ENCODE measurements at regions of chr2 and their contacts with region 1.

Region 1: GRCh38 chr2:19851116-19851695 is 50.6 kb downstream of the TTC32 start:
- DNase-seq: no peak
- ATAC-seq: peak; percentile 35
- H3K4me3 ChIP-seq: no peak overlapping the region
- H3K27ac ChIP-seq: no peak overlapping the region
- H3K4me1 ChIP-seq: no peaks in the 10 kb centered on the region
- H3K27me3 ChIP-seq: peaks cover 3% of the 10 kb centered on the region
- CTCF ChIP-seq: no peak
- POLR2A ChIP-seq: no peak
- RAD21 ChIP-seq: 0 out of 2 replicates have a peak, but pooled peaks have one; percentile 18

Region 2: GRCh38 chr2:19682493-19682892 is 168.7 kb before region 1 on chr2:
- CTCF ChIA-PET with region 1: no interaction called
- POLR2A ChIA-PET with region 1: no interaction called
- dilution Hi-C with region 1: no loop called
- in situ Hi-C with region 1: loop called (anchors 10 kb)
- intact Hi-C with region 1: no loop called
- DNase-seq: peak; percentile 31
- ATAC-seq: no peak
- H3K4me3 ChIP-seq: no peak overlapping the region
- H3K27ac ChIP-seq: no peak overlapping the region
- H3K4me1 ChIP-seq: peaks cover 2% of the 10 kb centered on the region; the same call in 1 of the 2 replicates
- H3K27me3 ChIP-seq: peaks cover 17% of the 10 kb centered on the region
- CTCF ChIP-seq: no peak
- POLR2A ChIP-seq: no peak
- RAD21 ChIP-seq: no peak

Region 3: DNA sequence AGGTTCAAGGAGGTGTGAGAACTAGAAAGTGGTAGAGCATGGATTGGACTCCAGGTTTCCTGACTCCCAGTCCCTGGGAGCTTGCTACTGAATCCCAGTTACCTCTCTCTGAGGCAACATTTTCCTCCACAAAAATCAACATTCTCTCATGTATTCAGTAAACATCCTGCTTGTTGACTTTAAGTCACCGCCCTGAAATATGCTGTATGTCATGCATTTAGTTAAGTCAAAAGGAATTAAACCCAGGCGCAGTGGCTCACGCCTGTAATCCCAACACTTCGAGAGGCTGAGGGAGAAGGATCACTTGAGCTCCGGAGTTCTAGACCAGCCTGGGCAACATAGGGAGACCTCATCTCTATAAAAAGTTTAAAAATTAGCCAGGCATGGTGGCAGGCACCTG is 157.5 kb after region 1 on chr2:
- CTCF ChIA-PET with region 1: no interaction called
- POLR2A ChIA-PET with region 1: no interaction called
- dilution Hi-C with region 1: no loop called
- in situ Hi-C with region 1: no loop called
- intact Hi-C with region 1: no loop called
- DNase-seq: no peak
- ATAC-seq: no peak
- H3K4me3 ChIP-seq: no peak overlapping the region
- H3K27ac ChIP-seq: no peak overlapping the region
- H3K4me1 ChIP-seq: peaks cover 3% of the 10 kb centered on the region
- H3K27me3 ChIP-seq: peaks cover 14% of the 10 kb centered on the region
- CTCF ChIP-seq: no peak
- POLR2A ChIP-seq: no peak
- RAD21 ChIP-seq: no peak

Region 4: GRCh38 chr2:20135631-20136050 is 284.4 kb after region 1 on chr2:
- CTCF ChIA-PET with region 1: no interaction called
- POLR2A ChIA-PET with region 1: no interaction called
- dilution Hi-C with region 1: no loop called
- in situ Hi-C with region 1: no loop called
- intact Hi-C with region 1: no loop called
- DNase-seq: peak; percentile 61
- ATAC-seq: peak; percentile 85
- H3K4me3 ChIP-seq: no peak overlapping the region
- H3K27ac ChIP-seq: no peak overlapping the region
- H3K4me1 ChIP-seq: peaks cover 8% of the 10 kb centered on the region
- H3K27me3 ChIP-seq: peaks cover 13% of the 10 kb centered on the region
- CTCF ChIP-seq: peak; percentile 81
- POLR2A ChIP-seq: no peak
- RAD21 ChIP-seq: peak; percentile 78

Region 5: DNA sequence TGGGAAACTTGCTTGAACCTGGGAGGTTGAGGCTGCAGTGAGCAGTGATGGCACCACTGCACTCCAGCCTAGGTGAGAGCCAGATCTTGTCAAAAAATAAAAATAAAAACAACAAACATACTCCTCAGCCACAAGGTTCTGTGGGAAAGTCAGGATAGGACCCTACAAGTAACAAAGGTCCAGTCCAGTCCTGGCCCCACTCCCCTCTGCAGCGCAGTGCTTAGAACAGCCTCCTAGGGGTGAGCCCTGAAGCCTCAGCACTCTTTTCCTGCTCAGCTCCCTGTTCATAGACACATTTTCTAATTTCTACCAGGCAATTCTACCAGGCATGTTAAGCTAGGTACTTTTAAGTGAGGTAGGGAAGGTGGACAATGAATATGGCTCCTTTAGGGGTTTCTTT is 395.9 kb after region 1 on chr2:
- CTCF ChIA-PET with region 1: no interaction called
- POLR2A ChIA-PET with region 1: no interaction called
- dilution Hi-C with region 1: no loop called
- in situ Hi-C with region 1: no loop called
- intact Hi-C with region 1: no loop called
- DNase-seq: no peak
- ATAC-seq: no peak
- H3K4me3 ChIP-seq: no peak overlapping the region
- H3K27ac ChIP-seq: no peak overlapping the region
- H3K4me1 ChIP-seq: no peaks in the 10 kb centered on the region
- H3K27me3 ChIP-seq: no peaks in the 10 kb centered on the region
- CTCF ChIP-seq: no peak
- POLR2A ChIP-seq: no peak
- RAD21 ChIP-seq: no peak